HAP-1 (cell line): ENCODE measurements at regions of chr20 and their contacts with region 1.

Region 1: DNA sequence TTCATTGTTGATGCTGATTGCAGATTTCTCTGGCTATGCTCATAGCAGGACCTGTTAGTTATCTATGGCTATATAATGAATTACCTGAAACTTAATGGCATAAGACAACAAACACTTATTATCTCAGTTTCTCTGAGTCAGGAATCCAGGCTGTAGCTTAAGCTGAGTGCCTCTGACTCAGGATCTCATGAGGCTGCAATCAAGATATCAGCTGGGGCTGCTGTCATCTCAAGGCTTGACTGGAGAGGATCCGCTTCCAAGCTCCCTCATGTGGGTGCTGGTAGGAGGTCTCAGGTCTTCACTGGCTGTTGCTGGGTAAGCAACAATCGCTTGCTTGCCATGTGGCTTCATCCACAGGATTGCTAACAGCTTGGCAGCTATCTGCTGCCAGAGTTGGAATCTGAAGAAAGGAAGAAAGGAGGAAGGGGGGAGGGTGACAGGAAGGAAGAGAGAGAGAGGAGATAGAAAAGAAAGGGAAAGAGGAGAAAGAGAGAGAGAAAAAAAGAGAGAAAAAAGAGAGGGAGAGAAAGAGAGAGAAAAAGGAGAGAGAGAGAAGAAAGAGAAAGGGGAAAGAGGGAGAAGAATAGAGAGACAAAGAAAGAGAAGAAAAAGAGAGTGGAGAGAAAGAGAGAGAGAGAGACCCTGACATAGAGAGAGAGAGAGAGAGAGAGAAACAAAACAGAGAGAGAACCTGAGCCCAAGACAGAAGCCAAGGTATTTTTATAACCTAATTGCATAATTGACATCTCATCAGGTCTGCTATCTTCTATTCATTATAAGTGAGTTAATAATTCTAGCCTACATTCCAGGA is 579.0 kb upstream of the BTBD3 start:
- DNase-seq: no peak
- H3K4me3 ChIP-seq: no peak overlapping the region
- H3K4me1 ChIP-seq: 0 out of 2 replicates have a peak, but pooled peaks cover 6% of the 10 kb centered on the region
- H3K27me3 ChIP-seq: no peaks in the 10 kb centered on the region

Region 2: DNA sequence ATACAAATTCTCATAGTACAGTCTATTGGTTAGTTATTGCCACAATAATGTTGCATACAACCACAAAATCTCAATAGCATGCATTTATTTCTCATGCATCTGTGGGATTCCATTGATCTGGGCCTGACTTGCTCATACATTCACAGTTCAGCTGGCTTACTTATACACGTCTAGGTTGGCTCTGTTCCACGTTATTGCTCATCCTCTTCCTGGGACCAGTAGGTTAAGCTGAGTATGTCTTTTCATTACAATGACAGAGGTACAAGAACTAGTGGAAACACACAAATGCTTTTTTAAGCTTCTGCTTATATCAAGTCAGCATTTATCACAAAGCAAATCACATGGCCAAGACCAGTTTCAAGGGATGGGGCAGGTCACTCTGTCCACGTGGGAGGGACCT is 93.7 kb after region 1 on chr20:
- in situ Hi-C with region 1: loop called (anchors 25 kb)
- DNase-seq: no peak
- H3K4me3 ChIP-seq: no peak overlapping the region
- H3K4me1 ChIP-seq: peaks cover 2% of the 10 kb centered on the region
- H3K27me3 ChIP-seq: no peaks in the 10 kb centered on the region